Activated CD4-positive, alpha-beta T cell treated with anti-CD3 and anti-CD28 coated beads for 36 hours (primary cell): ENCODE measurements at regions of chr12 and their contacts with region 1.

Region 1: GRCh38 chr12:53492830-53493611 is 6.2 kb downstream of the MAP3K12 start:
- DNase-seq: peak; percentile 93
- ATAC-seq: peak; percentile 94
- H3K4me3 Mint-ChIP-seq: peak overlapping the region; percentile 80
- H3K27ac Mint-ChIP-seq: peak overlapping the region; percentile 88
- H3K4me1 Mint-ChIP-seq: peaks cover 20% of the 10 kb centered on the region
- H3K27me3 Mint-ChIP-seq: no peaks in the 10 kb centered on the region

Region 2: GRCh38 chr12:53441040-53441833 is 51.8 kb before region 1 on chr12 and contains the start of gene PRR13:
- CTCF ChIA-PET with region 1: no interaction called
- POLR2A ChIA-PET with region 1: interaction called, 4 read pairs
- intact Hi-C with region 1: loop called in 1 of 2 experiments (anchors 1 kb)
- DNase-seq: peak; percentile 100
- ATAC-seq: peak; percentile 99
- H3K4me3 Mint-ChIP-seq: peak within 1 kb of the TSS; percentile 92
- H3K27ac Mint-ChIP-seq: peak within 1 kb of the TSS; percentile 95
- H3K4me1 Mint-ChIP-seq: peaks cover 30% of the 10 kb centered on the region
- H3K27me3 Mint-ChIP-seq: no peaks in the 10 kb centered on the region
- total RNA-seq, gene PRR13: 250 to 266 TPM

Region 3: GRCh38 chr12:53481957-53482586 is 10.9 kb before region 1 on chr12:
- CTCF ChIA-PET with region 1: interaction called, 11 read pairs
- POLR2A ChIA-PET with region 1: interaction called, 11 read pairs
- intact Hi-C with region 1: no loop called
- DNase-seq: no peak
- ATAC-seq: peak; percentile 33
- H3K4me3 Mint-ChIP-seq: no peak overlapping the region
- H3K27ac Mint-ChIP-seq: peak overlapping the region; percentile 34
- H3K4me1 Mint-ChIP-seq: peaks cover 3% of the 10 kb centered on the region
- H3K27me3 Mint-ChIP-seq: no peaks in the 10 kb centered on the region